SK-N-SH (cell line): ENCODE measurements at regions of chr5 and their contacts with region 1.

Region 1: DNA sequence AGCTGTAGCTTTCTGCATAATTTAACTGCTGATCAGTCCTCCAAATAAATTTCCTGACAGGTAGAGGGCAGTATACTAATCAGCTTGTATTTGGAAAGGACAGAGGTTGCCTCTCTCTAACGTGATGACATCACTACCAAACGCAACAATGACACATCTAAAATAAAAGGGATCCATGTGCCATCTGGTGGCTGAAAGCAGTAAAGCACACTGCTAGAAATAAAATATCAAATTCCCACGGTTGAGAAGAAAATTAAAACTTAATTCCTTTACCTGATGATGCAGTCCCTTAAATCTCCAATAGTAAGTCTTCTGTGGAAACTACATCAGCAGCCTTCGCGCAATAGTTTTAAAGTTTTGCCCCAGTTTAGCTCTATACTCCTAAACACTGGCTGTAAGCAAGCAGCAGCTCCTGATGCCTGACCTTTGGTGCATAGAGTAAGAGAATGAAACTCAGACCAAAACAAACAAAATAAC is 54.5 kb downstream of the DIAPH1 start:
- DNase-seq: peak; percentile 59
- H3K4me3 ChIP-seq: peak overlapping the region in 1 of 2 experiments; percentile 31; a peak in 1 of 4 replicates
- H3K27ac ChIP-seq: peak overlapping the region; percentile 77 to 82
- H3K4me1 ChIP-seq: peaks cover 11 to 15% of the 10 kb centered on the region in 2 experiments; a peak in 3 of 4 replicates
- H3K27me3 ChIP-seq: no peaks in the 10 kb centered on the region
- CTCF ChIP-seq: peak; percentile 99
- EP300 ChIP-seq: peak in 1 of 2 experiments; percentile 43; a peak in 2 of 4 replicates
- RAD21 ChIP-seq: peak; percentile 83

Region 2: DNA sequence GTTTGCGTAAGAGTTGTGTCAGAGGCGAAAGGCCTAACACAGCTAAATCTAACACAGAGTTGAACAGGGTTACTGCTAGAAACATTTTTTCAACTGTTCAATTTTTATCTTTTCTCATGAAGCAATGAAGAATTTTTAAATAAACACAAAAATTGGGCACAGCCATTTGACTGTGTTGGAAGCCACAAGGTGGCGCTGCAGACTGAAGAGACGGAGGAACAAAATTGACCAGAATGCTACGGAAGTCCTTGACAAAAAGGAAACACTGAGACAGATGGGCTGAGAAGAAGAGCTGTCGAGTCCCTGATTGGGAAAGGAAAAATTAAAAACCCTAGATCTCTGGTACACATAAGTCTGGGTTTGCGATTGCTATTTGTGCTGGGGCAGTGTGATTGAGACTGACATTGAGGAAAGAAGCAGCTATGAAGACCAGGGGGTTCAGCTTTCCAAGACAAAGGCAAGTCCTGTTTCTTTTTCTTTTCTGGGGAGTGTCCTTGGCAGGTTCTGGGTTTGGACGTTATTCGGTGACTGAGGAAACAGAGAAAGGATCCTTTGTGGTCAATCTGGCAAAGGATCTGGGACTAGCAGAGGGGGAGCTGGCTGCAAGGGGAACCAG is 377.2 kb before region 1 on chr5 and contains the start of gene PCDHB9:
- CTCF ChIA-PET with region 1: interaction called, 27 read pairs
- POLR2A ChIA-PET with region 1: interaction called, 7 read pairs
- DNase-seq: peak; percentile 61
- H3K4me3 ChIP-seq: peak within 1 kb of the TSS; percentile 45 to 59
- H3K27ac ChIP-seq: no peak within 1 kb of the TSS; a peak in 1 of 4 replicates
- H3K4me1 ChIP-seq: no peaks in the 10 kb centered on the region
- H3K27me3 ChIP-seq: no peaks in the 10 kb centered on the region
- CTCF ChIP-seq: peak; percentile 71
- EP300 ChIP-seq: no peak
- RAD21 ChIP-seq: peak; percentile 59
- polyA plus RNA-seq, gene PCDHB9: 1.4 and 2.4 TPM in 2 replicates

Region 3: DNA sequence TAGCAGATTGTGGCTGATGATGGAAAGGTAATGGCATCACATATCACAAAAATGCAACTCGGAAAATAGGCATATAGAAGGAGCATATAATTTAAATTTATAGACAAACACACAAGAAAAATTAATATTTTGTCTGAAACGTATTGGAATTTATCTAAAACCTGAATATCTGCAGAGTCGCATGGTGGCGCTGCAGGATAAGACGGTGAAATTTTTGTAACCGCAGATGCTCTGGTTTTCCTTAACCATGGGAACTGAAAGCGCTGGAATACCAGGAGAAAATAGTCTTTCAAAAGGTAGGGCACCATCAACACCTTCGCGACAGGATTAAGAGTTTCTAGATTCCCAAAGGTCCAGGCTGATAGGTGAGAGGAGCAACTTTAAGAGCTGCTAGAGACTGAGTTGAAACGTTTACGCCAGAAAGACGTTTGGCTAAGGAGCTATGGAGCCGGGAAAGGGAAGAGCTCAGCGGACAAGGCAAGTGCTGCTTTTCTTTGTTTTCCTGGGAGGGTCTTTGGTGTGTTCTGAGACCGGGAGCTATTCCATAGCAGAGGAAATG is 330.1 kb before region 1 on chr5:
- CTCF ChIA-PET with region 1: interaction called, 15 read pairs
- POLR2A ChIA-PET with region 1: no interaction called
- DNase-seq: no peak
- H3K4me3 ChIP-seq: peak overlapping the region; percentile 11 to 33; a peak in 3 of 4 replicates
- H3K27ac ChIP-seq: no peak overlapping the region
- H3K4me1 ChIP-seq: no peaks in the 10 kb centered on the region
- H3K27me3 ChIP-seq: no peaks in the 10 kb centered on the region
- CTCF ChIP-seq: peak; percentile 46
- EP300 ChIP-seq: no peak
- RAD21 ChIP-seq: peak; percentile 49

Region 4: DNA sequence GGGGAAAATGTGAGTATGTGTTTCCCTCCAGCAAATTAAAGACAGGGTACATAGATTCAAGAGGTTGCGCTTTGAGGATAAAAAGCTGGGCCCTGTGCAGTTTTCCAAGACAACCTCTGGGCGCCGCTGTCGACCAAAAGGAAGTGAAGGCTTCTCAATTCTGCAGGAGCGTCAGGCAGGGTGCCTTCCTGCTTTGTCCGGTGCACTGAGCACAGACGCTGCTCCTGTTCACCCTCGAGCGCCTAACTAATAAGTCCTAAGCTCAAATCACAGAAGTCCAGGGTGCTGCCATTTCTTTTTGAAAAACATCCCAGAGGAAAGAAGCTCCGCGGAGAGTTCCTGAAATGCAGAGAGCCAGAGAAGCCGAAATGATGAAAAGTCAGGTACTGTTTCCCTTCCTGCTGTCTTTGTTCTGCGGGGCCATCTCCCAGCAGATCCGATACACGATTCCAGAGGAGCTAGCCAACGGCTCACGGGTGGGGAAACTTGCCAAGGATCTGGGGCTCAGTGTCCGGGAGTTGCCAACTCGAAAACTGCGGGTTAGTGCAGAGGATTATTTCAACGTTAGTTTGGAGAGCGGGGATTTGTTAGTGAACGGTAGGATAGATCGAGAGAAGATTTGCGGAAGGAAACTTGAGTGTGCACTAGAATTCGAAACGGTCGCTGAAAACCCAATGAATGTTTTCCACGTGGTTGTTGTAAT is 214.2 kb before region 1 on chr5 and contains the start of gene PCDHGB1:
- CTCF ChIA-PET with region 1: interaction called, 13 read pairs
- POLR2A ChIA-PET with region 1: interaction called, 3 read pairs
- DNase-seq: peak; percentile 63
- H3K4me3 ChIP-seq: peak within 1 kb of the TSS in 1 of 2 experiments; percentile 6; a peak in 1 of 4 replicates
- H3K27ac ChIP-seq: no peak within 1 kb of the TSS
- H3K4me1 ChIP-seq: no peaks in the 10 kb centered on the region
- H3K27me3 ChIP-seq: no peaks in the 10 kb centered on the region
- CTCF ChIP-seq: peak; percentile 39
- EP300 ChIP-seq: no peak
- RAD21 ChIP-seq: peak; percentile 44
- polyA plus RNA-seq, gene PCDHGB1: 0.63 and 0.77 TPM in 2 replicates

Region 5: DNA sequence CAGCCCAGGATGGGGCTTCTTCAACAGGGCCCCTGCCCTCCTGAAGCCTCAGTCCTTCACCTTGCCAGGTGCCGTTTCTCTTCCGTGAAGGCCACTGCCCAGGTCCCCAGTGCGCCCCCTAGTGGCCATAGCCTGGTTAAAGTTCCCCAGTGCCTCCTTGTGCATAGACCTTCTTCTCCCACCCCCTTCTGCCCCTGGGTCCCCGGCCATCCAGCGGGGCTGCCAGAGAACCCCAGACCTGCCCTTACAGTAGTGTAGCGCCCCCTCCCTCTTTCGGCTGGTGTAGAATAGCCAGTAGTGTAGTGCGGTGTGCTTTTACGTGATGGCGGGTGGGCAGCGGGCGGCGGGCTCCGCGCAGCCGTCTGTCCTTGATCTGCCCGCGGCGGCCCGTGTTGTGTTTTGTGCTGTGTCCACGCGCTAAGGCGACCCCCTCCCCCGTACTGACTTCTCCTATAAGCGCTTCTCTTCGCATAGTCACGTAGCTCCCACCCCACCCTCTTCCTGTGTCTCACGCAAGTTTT is 51.8 kb before region 1 on chr5:
- CTCF ChIA-PET with region 1: interaction called, 43 read pairs
- POLR2A ChIA-PET with region 1: no interaction called
- DNase-seq: peak; percentile 69
- H3K4me3 ChIP-seq: peak overlapping the region in 1 of 2 experiments; percentile 33; a peak in 1 of 4 replicates
- H3K27ac ChIP-seq: peak overlapping the region; percentile 99 to 100
- H3K4me1 ChIP-seq: peaks cover 71 to 77% of the 10 kb centered on the region in 2 experiments
- H3K27me3 ChIP-seq: no peaks in the 10 kb centered on the region
- CTCF ChIP-seq: peak; percentile 88
- EP300 ChIP-seq: no peak
- RAD21 ChIP-seq: peak; percentile 18; the same call in 1 of the 2 replicates

Region 6: GRCh38 chr5:141618804-141619554 is 54.7 kb after region 1 on chr5 and contains the start of gene DIAPH1:
- CTCF ChIA-PET with region 1: interaction called, 15 read pairs
- POLR2A ChIA-PET with region 1: no interaction called
- DNase-seq: peak; percentile 99
- H3K4me3 ChIP-seq: peak within 1 kb of the TSS; percentile 72 to 82
- H3K27ac ChIP-seq: peak within 1 kb of the TSS; percentile 67 to 72
- H3K4me1 ChIP-seq: peaks cover 9 to 12% of the 10 kb centered on the region in 2 experiments; a peak in 2 of 4 replicates
- H3K27me3 ChIP-seq: no peaks in the 10 kb centered on the region
- CTCF ChIP-seq: peak; percentile 95
- EP300 ChIP-seq: peak; percentile 14 to 65; a peak in 2 of 4 replicates
- RAD21 ChIP-seq: peak; percentile 74
- polyA plus RNA-seq, gene DIAPH1: 28.2 and 30.4 TPM in 2 replicates

Region 7: DNA sequence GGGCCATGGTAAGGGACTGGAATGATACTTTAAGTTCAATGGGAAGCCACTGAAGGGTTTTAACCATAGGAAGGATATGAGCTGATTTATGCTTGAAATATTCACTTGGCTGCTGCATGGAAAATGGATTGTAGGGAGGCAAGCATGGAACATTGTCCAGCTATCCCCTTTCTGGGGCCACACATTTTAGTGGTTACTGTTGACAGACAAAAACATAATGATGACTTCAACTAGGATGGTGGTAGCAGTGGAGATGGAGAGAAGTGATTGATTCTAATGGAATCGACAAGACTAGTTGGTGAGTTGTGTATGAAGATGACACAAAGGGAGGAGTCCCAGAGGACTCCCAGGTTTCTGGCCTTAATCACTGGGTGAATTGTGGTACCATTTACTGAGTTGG is 93.2 kb after region 1 on chr5:
- CTCF ChIA-PET with region 1: no interaction called
- POLR2A ChIA-PET with region 1: no interaction called
- DNase-seq: no peak
- H3K4me3 ChIP-seq: no peak overlapping the region
- H3K27ac ChIP-seq: peak overlapping the region in 1 of 2 experiments; percentile 48; a peak in 2 of 4 replicates
- H3K4me1 ChIP-seq: peaks cover 0 to 8% of the 10 kb centered on the region in 2 experiments; a peak in 2 of 4 replicates
- H3K27me3 ChIP-seq: no peaks in the 10 kb centered on the region
- CTCF ChIP-seq: no peak
- EP300 ChIP-seq: no peak
- RAD21 ChIP-seq: no peak

Region 8: DNA sequence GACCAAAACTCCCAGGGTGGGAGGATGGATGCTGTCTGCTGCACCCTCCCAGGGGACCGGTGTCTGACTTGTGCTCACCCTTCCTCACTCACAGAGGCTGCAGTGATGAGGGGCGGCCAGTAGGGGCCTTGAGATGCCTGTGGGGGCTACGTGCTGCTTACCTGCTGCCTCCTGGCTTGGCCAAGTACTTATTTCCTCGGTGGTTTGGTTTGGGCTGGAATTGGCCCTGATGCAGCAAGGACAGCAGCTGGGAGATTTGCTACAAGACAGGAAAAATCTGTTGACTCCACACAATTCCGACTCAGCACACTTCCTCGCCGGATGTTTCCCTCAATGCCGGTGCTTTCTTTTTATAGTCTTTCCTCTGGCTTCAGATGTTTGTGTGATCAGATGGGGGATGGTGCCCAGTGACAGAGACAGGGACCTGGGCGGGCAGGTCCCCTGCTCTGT is 387.1 kb after region 1 on chr5:
- CTCF ChIA-PET with region 1: no interaction called
- POLR2A ChIA-PET with region 1: no interaction called
- DNase-seq: peak; percentile 63
- H3K4me3 ChIP-seq: no peak overlapping the region
- H3K27ac ChIP-seq: no peak overlapping the region
- H3K4me1 ChIP-seq: no peaks in the 10 kb centered on the region
- H3K27me3 ChIP-seq: no peaks in the 10 kb centered on the region
- CTCF ChIP-seq: peak; percentile 43
- EP300 ChIP-seq: no peak
- RAD21 ChIP-seq: no peak